GM13977 (cell line): ENCODE measurements at regions of chr14 and their contacts with region 1.

Region 1: GRCh38 chr14:22570132-22570949 is 18.7 kb downstream of the DAD1 start:
- DNase-seq: peak; percentile 80
- CTCF ChIP-seq: peak; percentile 92

Region 2: GRCh38 chr14:22653012-22653621 is 82.8 kb after region 1 on chr14:
- in situ Hi-C with region 1: loop called (anchors 5 kb)
- DNase-seq: peak; percentile 55
- CTCF ChIP-seq: peak; percentile 81